ENCODE measurements at regions of chr5 and their contacts with region 1.

Region 1: GRCh38 chr5:141557681-141558136 is 61.1 kb downstream of the DIAPH1 start:
- DNase-seq: peak; percentile 98
- H3K4me3 ChIP-seq: peak overlapping the region; percentile 23
- H3K27me3 ChIP-seq: no peaks in the 10 kb centered on the region
- CTCF ChIP-seq: peak; percentile 73

Region 2: DNA sequence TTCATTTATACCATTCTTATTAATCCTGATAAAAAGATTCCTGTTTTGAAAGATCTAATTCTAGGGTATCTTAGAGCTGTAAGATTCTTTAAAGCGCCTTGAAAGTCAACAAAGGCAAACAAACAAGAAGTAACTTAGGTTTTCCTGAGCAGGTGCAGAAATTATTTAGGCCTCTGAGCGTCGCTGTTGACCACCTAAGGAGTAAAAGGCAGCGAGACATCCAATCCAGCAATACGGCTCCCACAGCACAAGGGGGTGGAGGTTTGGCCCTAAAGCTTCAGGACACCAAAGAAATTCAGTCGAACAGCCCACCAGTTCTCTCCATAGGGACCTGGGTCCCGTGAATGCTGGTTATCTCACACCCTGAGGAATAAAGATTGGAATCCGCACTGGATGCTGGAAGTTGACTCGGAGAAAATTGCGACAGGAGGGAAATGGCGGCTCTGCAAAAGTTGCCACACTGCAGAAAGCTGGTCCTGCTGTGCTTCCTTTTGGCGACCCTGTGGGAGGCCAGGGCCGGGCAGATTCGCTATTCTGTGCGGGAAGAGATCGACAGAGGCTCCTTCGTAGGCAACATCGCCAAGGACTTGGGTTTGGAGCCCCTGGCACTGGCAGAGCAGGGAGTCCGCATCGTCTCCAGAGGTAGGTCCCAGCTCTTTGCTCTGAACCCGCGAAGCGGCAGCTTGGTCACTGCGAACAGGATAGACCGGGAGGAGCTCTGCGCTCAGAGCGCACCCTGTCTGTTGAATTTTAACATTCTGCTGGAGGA is 219.0 kb before region 1 on chr5 and contains the start of gene PCDHGA2:
- CTCF ChIA-PET with region 1: interaction called, 37 read pairs
- POLR2A ChIA-PET with region 1: no interaction called
- DNase-seq: no peak
- H3K4me3 ChIP-seq: peak within 1 kb of the TSS; percentile 38
- H3K27me3 ChIP-seq: no peaks in the 10 kb centered on the region
- CTCF ChIP-seq: peak; percentile 66
- polyA plus RNA-seq, gene PCDHGA2: 6.7 and 6.8 TPM in 2 replicates

Region 3: DNA sequence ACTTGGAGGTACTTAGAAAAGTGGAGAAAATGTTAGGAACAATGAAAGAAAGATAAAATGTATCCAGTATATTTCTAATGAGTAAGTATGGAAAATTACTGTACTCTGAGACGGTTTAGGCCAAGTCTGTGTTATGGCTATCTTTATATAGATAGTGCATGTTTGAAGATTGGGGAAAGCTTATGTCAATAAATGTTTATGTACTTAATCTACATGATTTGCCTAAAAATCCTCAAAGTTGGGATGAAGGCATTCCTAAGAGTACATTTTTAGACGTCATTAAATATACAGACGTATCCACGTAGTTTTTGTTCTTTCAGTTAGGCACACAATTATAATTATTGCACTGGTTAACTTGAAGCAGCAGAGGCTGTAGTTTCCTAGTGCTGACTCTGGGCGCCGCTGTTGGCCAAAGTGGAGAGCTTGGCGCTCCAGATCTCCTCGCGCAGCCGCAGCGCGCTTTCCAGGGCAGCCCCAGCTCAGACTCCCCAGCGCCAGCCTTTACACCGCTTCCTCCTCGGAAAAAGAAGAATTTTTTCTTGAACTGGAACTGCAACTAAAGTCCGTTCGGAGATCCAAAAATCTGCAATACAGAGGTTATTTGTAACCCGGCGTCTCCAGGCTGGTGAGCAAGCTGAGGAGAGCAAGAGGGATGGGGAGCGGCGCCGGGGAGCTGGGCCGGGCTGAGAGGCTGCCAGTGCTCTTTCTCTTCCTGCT is 170.3 kb before region 1 on chr5 and contains the start of gene PCDHGB4:
- CTCF ChIA-PET with region 1: interaction called, 11 read pairs
- POLR2A ChIA-PET with region 1: no interaction called
- DNase-seq: no peak
- H3K4me3 ChIP-seq: peak within 1 kb of the TSS; percentile 22; the same call in 1 of the 2 replicates
- H3K27me3 ChIP-seq: no peaks in the 10 kb centered on the region
- CTCF ChIP-seq: peak; percentile 60
- polyA plus RNA-seq, gene PCDHGB4: 11.8 and 12.2 TPM in 2 replicates

Region 4: GRCh38 chr5:141412854-141413539 is 144.7 kb before region 1 on chr5 and contains the start of gene PCDHGA10:
- CTCF ChIA-PET with region 1: interaction called, 112 read pairs
- POLR2A ChIA-PET with region 1: no interaction called
- DNase-seq: no peak
- H3K4me3 ChIP-seq: peak within 1 kb of the TSS; percentile 33
- H3K27me3 ChIP-seq: no peaks in the 10 kb centered on the region
- CTCF ChIP-seq: peak; percentile 67
- polyA plus RNA-seq, gene PCDHGA10: 2.7 and 3.9 TPM in 2 replicates

Region 5: GRCh38 chr5:141430332-141431113 is 127.2 kb before region 1 on chr5 and contains the start of gene PCDHGA12:
- CTCF ChIA-PET with region 1: interaction called, 72 read pairs
- POLR2A ChIA-PET with region 1: no interaction called
- DNase-seq: no peak
- H3K4me3 ChIP-seq: peak within 1 kb of the TSS; percentile 39
- H3K27me3 ChIP-seq: no peaks in the 10 kb centered on the region
- CTCF ChIP-seq: peak; percentile 59
- polyA plus RNA-seq, gene PCDHGA12: 6.1 and 7.9 TPM in 2 replicates

Region 6: GRCh38 chr5:141512390-141512910 is 45.3 kb before region 1 on chr5:
- CTCF ChIA-PET with region 1: interaction called, 40 read pairs
- POLR2A ChIA-PET with region 1: no interaction called
- DNase-seq: no peak
- H3K4me3 ChIP-seq: peak overlapping the region; percentile 39
- H3K27me3 ChIP-seq: no peaks in the 10 kb centered on the region
- CTCF ChIP-seq: peak; percentile 90

Region 7: GRCh38 chr5:141547488-141547887 is 10.2 kb before region 1 on chr5:
- CTCF ChIA-PET with region 1: interaction called, 56 read pairs
- POLR2A ChIA-PET with region 1: no interaction called
- DNase-seq: no peak
- H3K4me3 ChIP-seq: no peak overlapping the region
- H3K27me3 ChIP-seq: no peaks in the 10 kb centered on the region
- CTCF ChIP-seq: no peak